CD8-positive, alpha-beta T cell (primary cell): ENCODE measurements at regions of chr17 and their contacts with region 1.

Region 1: DNA sequence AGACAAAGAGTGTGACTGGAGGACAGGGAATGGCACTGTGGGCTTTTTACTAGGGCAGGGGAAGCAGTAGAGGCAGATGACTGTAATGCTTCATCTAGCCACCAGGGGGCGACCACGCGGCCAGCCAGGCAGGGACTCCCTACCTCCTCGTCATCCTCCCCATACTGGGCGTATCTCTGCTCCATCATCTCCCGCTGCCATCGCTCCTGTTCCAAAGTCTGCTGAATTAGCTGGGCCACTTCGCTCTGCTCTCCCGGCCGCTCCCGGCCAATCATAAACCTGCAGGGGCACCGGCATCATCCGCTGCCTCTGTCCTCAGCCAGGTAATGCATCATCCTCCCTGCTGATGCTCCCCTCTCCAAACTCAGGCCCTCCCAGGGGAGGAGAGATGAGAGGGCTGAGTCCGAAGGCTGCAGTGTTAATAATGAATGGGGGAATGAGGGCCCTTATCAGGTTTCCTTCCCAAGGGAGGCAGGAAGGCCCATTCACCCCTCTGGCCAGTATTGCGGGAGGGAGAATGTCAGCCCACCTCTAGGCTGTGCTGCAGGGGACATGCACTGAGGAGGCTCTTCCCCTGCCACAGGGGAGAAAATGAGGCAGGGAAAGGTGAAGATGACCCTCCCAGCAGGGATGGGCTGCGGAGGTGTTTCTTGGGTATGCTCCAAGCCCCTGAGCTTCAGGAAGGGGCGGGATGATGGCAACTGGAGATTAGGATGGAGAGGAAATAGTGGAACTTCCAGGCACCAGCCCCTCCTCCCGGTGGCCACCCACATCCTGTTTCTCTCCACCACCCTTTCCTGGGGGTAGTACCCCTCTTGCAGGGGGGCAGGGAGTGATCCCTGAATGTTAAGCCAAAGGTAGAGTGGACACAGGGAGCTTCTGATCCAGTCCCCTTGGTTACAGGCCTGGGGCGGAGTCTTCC is 10.3 kb upstream of the SAMD14 start:
- DNase-seq: peak; percentile 61 to 89 (median 83)
- ATAC-seq: peak; percentile 92
- H3K4me3 ChIP-seq: peak overlapping the region; percentile 7 to 24
- H3K4me3 Mint-ChIP-seq: peak overlapping the region; percentile 59
- H3K27ac ChIP-seq: peak overlapping the region in 1 of 2 experiments; percentile 47
- H3K27ac Mint-ChIP-seq: peak overlapping the region; percentile 70
- H3K4me1 ChIP-seq: peaks cover 52% of the 10 kb centered on the region
- H3K4me1 Mint-ChIP-seq: peaks cover 54% of the 10 kb centered on the region
- H3K27me3 ChIP-seq: no peaks in the 10 kb centered on the region
- H3K27me3 Mint-ChIP-seq: no peaks in the 10 kb centered on the region
- CTCF ChIP-seq: peak; percentile 92

Region 2: DNA sequence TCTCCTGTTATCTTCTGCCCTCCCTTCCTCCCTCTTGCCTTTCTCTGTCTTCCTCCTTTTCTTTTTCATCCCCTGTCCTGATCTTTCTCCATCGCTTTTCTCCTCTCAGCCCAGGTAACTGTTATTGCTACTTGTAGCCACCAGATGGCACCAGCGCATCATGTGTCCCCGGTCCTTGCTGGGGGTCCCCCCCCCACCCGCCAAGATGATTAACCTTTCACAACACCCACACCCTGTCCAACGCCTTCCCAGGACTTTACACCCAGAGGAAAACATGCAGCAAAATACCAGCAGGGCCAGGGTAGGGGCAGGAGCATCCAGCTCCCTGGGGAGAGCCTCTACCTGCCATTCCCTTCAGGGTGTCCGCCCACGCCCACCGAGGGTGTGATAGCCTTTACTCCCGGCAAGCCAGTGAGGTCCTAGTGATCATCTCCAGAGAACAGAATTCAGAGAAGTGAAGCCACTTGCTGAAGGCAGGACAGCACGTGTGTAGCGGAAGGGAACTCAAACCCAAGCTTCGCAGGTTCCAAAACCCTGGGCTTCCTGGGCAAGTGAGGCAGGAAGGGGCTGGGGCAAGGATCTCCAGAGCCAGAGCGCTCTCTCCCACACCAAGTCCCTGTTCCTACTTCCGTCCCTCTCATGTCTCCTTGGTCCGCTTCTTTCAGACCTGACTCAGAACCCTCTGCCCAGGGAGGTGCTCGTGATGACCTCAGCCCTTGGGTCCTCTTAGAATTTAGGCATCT is 278.9 kb before region 1 on chr17:
- CTCF ChIA-PET with region 1: no interaction called
- POLR2A ChIA-PET with region 1: no interaction called
- intact Hi-C with region 1: no loop called
- DNase-seq: peak; percentile 14 to 81 (median 66)
- ATAC-seq: peak; percentile 90
- H3K4me3 ChIP-seq: no peak overlapping the region
- H3K4me3 Mint-ChIP-seq: no peak overlapping the region
- H3K27ac ChIP-seq: no peak overlapping the region
- H3K27ac Mint-ChIP-seq: no peak overlapping the region
- H3K4me1 ChIP-seq: no peaks in the 10 kb centered on the region
- H3K4me1 Mint-ChIP-seq: peaks cover 4% of the 10 kb centered on the region
- H3K27me3 ChIP-seq: peaks cover 0 to 3% of the 10 kb centered on the region in 2 experiments
- H3K27me3 Mint-ChIP-seq: peaks cover 11% of the 10 kb centered on the region
- CTCF ChIP-seq: peak; percentile 93

Region 3: DNA sequence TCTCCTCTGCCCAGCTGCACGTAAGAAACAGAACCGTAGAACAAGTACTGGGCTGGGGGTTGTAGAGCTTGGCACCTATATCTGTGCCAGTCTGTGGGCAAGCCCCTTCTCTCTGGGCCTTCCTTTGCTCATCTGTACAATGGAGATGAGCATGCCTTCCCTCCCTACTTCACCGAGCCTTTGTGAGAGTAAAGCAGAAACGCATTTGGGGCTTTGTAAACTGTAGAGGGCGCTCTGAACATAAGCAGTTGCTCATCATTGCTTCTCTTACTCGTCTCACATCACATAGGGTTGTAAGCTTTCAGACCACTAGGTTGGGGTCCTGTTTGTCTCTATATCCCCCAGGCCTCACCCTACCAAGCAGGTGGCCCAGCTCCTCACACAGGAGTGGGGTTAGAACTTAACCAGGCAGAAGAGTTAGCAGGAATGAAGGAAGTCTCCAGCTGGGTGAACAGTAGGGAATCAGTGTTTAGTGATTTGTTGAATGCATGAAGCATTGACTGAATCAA is 25.3 kb before region 1 on chr17:
- CTCF ChIA-PET with region 1: interaction called, 54 read pairs
- POLR2A ChIA-PET with region 1: no interaction called
- intact Hi-C with region 1: no loop called
- DNase-seq: peak in 5 of 9 experiments; percentile 30 to 69 (median 45)
- ATAC-seq: peak; percentile 56
- H3K4me3 ChIP-seq: no peak overlapping the region
- H3K4me3 Mint-ChIP-seq: no peak overlapping the region
- H3K27ac ChIP-seq: no peak overlapping the region
- H3K27ac Mint-ChIP-seq: no peak overlapping the region
- H3K4me1 ChIP-seq: peaks cover 14% of the 10 kb centered on the region
- H3K4me1 Mint-ChIP-seq: peaks cover 13% of the 10 kb centered on the region
- H3K27me3 ChIP-seq: peaks cover 11 to 17% of the 10 kb centered on the region in 2 experiments
- H3K27me3 Mint-ChIP-seq: peaks cover 36% of the 10 kb centered on the region
- CTCF ChIP-seq: peak; percentile 56

Region 4: DNA sequence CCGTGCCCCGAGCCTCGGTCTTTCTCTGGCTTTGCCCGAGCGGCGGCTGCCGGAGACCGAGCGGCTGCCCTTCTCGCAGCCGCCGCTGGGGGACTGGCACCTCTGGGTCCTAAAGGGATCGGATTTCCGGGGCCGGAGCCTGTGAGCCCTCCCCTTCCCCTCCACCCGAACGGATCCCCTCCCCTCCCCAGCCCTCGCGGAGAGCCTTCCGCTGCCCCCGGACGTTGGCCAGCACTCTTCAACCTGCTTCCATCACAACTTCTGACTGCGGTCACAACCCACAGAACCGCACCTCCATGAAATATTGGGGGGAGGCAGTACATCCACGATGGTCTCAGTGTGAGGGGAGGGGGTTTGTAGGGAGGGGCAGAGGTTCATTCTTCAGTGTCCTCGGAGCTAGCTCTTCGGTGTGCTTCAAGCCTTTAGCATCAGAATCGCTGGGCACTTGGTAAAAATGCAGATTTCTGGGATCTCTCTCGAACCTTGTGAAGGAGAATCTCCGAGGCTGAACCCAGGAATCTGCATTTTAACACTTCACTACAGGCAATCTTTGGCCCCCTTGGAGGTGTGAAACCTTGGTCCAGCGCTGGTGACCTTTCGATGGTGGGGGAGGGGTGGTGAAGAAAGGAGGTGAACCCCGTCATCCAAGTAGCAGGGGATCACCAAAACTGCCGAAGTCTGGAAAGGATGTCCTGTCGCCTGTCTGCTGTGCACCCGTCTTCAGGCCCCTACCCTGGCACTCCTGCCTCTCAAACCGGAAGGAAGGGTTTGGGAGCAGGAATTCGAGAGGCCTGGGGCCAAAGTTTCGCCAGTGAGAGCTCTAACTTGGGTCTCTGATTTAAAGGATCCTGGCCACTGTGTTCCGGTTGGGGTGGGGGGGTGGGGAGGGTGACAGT is 11.1 kb after region 1 on chr17:
- CTCF ChIA-PET with region 1: interaction called, 78 read pairs
- POLR2A ChIA-PET with region 1: interaction called, 34 read pairs
- intact Hi-C with region 1: loop called in 1 of 2 experiments (anchors 1 kb)
- DNase-seq: peak; percentile 64 to 92 (median 82)
- ATAC-seq: peak; percentile 65
- H3K4me3 ChIP-seq: peak overlapping the region; percentile 81 to 92
- H3K4me3 Mint-ChIP-seq: peak overlapping the region; percentile 86
- H3K27ac ChIP-seq: peak overlapping the region; percentile 22 to 70
- H3K27ac Mint-ChIP-seq: peak overlapping the region; percentile 89
- H3K4me1 ChIP-seq: peaks cover 44% of the 10 kb centered on the region
- H3K4me1 Mint-ChIP-seq: peaks cover 46% of the 10 kb centered on the region
- H3K27me3 ChIP-seq: no peaks in the 10 kb centered on the region
- H3K27me3 Mint-ChIP-seq: no peaks in the 10 kb centered on the region
- CTCF ChIP-seq: peak; percentile 57

Region 5: GRCh38 chr17:50169121-50169764 is 29.0 kb after region 1 on chr17:
- CTCF ChIA-PET with region 1: interaction called, 36 read pairs
- POLR2A ChIA-PET with region 1: no interaction called
- intact Hi-C with region 1: no loop called
- DNase-seq: peak; percentile 37 to 83 (median 70)
- ATAC-seq: peak; percentile 86
- H3K4me3 ChIP-seq: peak overlapping the region; percentile 28 to 32
- H3K4me3 Mint-ChIP-seq: peak overlapping the region; percentile 75
- H3K27ac ChIP-seq: peak overlapping the region; percentile 17 to 28
- H3K27ac Mint-ChIP-seq: peak overlapping the region; percentile 90
- H3K4me1 ChIP-seq: peaks cover 20% of the 10 kb centered on the region
- H3K4me1 Mint-ChIP-seq: peaks cover 10% of the 10 kb centered on the region
- H3K27me3 ChIP-seq: no peaks in the 10 kb centered on the region
- H3K27me3 Mint-ChIP-seq: peaks cover 3% of the 10 kb centered on the region
- CTCF ChIP-seq: peak; percentile 55